ENCODE measurements at regions of chr7 and their contacts with region 1.

Region 1: DNA sequence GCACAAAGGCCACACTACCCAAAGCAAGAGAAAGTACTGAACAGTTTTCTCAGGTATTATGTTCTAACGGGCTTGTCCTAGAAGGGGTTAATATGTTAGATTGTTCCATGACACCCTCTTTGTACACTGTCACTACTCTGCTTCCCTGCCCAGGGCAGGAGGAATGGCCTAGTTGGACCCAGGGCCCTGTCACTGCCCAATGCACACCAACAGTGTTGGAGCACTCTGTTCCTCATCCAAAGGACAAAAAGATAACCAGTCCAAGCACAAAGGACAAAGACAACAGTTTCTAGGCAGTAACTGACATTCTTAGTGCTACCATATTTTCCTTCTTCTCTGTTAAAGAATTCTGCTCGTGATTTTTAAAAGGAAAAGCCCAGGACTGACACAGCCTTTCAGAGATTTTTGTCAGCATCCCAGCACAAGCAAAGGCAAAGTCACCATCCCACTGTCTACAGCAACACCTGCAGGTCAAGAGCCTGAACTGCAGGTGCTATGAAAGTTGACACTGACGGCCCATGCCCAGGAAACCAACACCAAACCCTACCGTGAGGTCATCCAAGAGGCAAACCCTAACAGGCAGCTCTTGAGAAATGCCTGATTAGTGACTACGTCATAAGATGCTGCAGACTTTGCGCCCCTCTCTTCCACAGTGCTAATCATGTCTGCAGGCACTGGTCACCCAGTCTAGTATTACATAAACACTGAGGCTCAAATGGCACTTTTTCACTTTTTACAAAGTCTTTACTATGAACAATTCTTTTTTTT is 13.2 kb downstream of the NUDCD3 start:
- DNase-seq: peak in 4 of 5 donors; percentile 73 to 84 (median 78)
- H3K4me3 ChIP-seq: peak overlapping the region in 1 of 3 donors; percentile 30
- H3K27ac ChIP-seq: no peak overlapping the region
- H3K4me1 ChIP-seq: peaks cover 0 to 5% (median 2%) of the 10 kb centered on the region in 3 donors
- H3K27me3 ChIP-seq: no peaks in the 10 kb centered on the region
- CTCF ChIP-seq: peak; percentile 98

Region 2: DNA sequence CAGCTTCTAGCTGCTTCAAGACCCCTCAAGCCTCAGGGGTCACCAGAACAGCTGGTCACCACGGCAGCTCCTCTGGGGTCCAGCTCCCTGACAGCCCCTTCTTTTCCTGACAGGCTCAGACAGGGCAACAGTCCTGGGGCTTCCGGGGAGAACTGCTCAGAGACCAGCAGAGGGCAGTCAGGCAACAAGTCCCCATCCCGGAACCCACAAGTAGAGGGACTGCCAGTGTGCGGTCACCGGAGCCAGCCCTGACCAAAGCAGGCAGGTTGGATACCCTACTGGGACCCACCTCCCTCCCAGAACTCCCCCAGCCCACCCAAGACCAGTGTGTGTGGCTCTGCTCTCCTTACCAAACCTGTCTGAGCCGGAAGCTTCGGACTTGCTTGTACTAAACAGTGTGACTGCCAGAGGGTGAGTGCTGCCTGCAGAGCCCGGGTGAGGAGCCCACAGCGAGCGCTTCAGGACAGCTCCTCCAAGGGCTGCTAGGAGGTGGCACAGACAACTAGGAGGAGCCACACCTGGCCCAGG is 236.2 kb before region 1 on chr7:
- intact Hi-C with region 1: loop called (anchors 10 kb)
- DNase-seq: peak in 4 of 5 donors; percentile 81 to 92 (median 83)
- H3K4me3 ChIP-seq: no peak overlapping the region
- H3K27ac ChIP-seq: no peak overlapping the region
- H3K4me1 ChIP-seq: peaks cover 0 to 4% (median 0%) of the 10 kb centered on the region in 3 donors
- H3K27me3 ChIP-seq: no peaks in the 10 kb centered on the region
- CTCF ChIP-seq: peak; percentile 83